Mucosa of descending colon (tissue), 3 donors: ENCODE measurements at regions of chr4 and their contacts with region 1.

Region 1: GRCh38 chr4:138645289-138645688 is 370.3 kb upstream of the NOCT start:
- DNase-seq: no peak
- ATAC-seq: no peak
- H3K4me3 ChIP-seq: no peak overlapping the region
- H3K4me1 ChIP-seq: no peaks in the 10 kb centered on the region
- CTCF ChIP-seq: no peak

Region 2: GRCh38 chr4:138674209-138674608 is 28.9 kb after region 1 on chr4:
- intact Hi-C with region 1: loop called in 1 of 2 experiments (anchors 2 kb)
- DNase-seq: no peak
- ATAC-seq: no peak
- H3K4me3 ChIP-seq: no peak overlapping the region
- H3K4me1 ChIP-seq: no peaks in the 10 kb centered on the region
- CTCF ChIP-seq: no peak

Region 3: GRCh38 chr4:138740816-138741745 is 95.8 kb after region 1 on chr4:
- intact Hi-C with region 1: no loop called
- DNase-seq: no peak
- ATAC-seq: no peak
- H3K4me3 ChIP-seq: no peak overlapping the region
- H3K4me1 ChIP-seq: no peaks in the 10 kb centered on the region
- CTCF ChIP-seq: no peak